Mammary epithelial cell (primary cell): ENCODE measurements at regions of chr10 and their contacts with region 1.

Region 1: DNA sequence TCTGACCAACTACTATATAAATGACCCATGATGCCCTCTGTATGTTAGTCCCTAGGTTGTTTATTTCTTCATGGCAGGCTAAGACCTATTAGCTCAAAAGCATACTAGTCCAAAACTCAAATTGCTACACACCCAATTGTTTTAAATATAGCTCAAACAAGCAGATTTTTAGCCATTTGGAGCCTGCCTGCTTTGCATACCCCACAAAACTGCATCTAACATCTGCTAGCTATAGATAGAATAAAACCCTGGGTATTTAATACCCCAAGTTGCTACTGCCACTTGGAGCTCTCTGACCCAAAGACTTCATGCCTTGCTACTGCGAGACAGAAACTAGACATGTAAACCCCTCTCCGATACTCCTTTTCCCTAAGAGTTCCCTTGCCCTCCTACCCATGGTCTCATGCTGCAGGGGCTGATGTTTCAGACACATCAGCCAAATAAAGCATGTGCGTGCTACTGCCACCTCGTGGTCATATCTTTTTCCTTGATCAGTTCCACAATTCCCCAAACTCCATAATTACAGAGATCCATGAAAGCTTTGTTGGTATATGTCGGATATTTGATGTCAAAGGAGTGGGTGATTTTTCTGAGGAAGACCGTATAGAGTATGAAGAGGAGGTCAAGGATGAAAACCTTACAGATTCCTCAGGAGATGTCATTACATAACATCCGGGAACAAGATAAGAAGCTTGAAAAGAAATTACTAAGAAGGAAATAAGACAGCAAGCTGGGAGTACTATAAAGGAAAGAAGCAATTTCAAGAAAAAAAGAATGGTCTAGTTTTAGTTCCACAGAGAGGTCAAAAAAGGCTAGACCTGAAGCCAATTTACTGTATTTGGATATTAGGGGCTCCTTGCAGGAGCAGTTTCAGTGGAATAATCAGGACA is 386.6 kb downstream of the SH2D4B start:
- DNase-seq: peak; percentile 21
- H3K4me3 ChIP-seq: no peak overlapping the region
- H3K27ac ChIP-seq: no peak overlapping the region
- H3K4me1 ChIP-seq: no peaks in the 10 kb centered on the region
- H3K27me3 ChIP-seq: no peaks in the 10 kb centered on the region
- CTCF ChIP-seq: peak; percentile 48 to 74

Region 2: DNA sequence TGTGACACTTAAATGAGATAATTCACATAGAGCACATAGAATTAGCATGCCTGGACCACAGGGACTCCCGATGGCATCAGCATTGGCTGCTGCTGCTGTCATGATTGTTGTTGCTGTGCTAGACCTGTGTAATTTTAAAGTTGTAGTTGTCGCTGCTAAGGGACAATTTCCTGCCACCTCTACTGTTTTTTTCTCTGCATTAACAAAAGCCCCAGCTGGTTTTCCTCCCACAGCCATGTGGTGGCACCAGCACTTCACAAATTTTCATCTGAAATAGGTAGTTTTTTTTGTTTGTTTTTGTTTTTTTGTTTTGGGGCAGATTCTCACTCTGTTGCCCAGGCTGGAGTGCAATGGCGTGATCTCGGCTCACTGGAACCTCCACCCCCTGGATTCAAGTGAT is 541.3 kb before region 1 on chr10:
- CTCF ChIA-PET with region 1: no interaction called
- dilution Hi-C with region 1: no loop called
- in situ Hi-C with region 1: no loop called
- intact Hi-C with region 1: loop called (anchors 1 kb)
- DNase-seq: peak; percentile 27
- H3K4me3 ChIP-seq: no peak overlapping the region
- H3K27ac ChIP-seq: no peak overlapping the region
- H3K4me1 ChIP-seq: no peaks in the 10 kb centered on the region
- H3K27me3 ChIP-seq: no peaks in the 10 kb centered on the region
- CTCF ChIP-seq: peak; percentile 66 to 69

Region 3: GRCh38 chr10:80599424-80599847 is 324.9 kb before region 1 on chr10:
- CTCF ChIA-PET with region 1: no interaction called
- dilution Hi-C with region 1: no loop called
- in situ Hi-C with region 1: no loop called
- intact Hi-C with region 1: loop called (anchors 1 kb)
- DNase-seq: peak; percentile 25
- H3K4me3 ChIP-seq: no peak overlapping the region
- H3K27ac ChIP-seq: no peak overlapping the region
- H3K4me1 ChIP-seq: no peaks in the 10 kb centered on the region
- H3K27me3 ChIP-seq: no peaks in the 10 kb centered on the region
- CTCF ChIP-seq: peak; percentile 91 to 93

Region 4: GRCh38 chr10:80699602-80700039 is 224.7 kb before region 1 on chr10:
- CTCF ChIA-PET with region 1: no interaction called
- dilution Hi-C with region 1: no loop called
- in situ Hi-C with region 1: loop called in 1 of 2 experiments (anchors 25 kb)
- intact Hi-C with region 1: loop called (anchors 1 kb)
- DNase-seq: peak; percentile 40
- H3K4me3 ChIP-seq: no peak overlapping the region
- H3K27ac ChIP-seq: no peak overlapping the region
- H3K4me1 ChIP-seq: no peaks in the 10 kb centered on the region
- H3K27me3 ChIP-seq: no peaks in the 10 kb centered on the region
- CTCF ChIP-seq: peak; percentile 74 to 89

Region 5: GRCh38 chr10:80855348-80855971 is 68.8 kb before region 1 on chr10:
- CTCF ChIA-PET with region 1: no interaction called
- dilution Hi-C with region 1: no loop called
- in situ Hi-C with region 1: no loop called
- intact Hi-C with region 1: loop called (anchors 1 kb)
- DNase-seq: no peak
- H3K4me3 ChIP-seq: no peak overlapping the region
- H3K27ac ChIP-seq: no peak overlapping the region
- H3K4me1 ChIP-seq: no peaks in the 10 kb centered on the region
- H3K27me3 ChIP-seq: peaks cover 3% of the 10 kb centered on the region
- CTCF ChIP-seq: peak in 1 of 2 donors; percentile 42

Region 6: DNA sequence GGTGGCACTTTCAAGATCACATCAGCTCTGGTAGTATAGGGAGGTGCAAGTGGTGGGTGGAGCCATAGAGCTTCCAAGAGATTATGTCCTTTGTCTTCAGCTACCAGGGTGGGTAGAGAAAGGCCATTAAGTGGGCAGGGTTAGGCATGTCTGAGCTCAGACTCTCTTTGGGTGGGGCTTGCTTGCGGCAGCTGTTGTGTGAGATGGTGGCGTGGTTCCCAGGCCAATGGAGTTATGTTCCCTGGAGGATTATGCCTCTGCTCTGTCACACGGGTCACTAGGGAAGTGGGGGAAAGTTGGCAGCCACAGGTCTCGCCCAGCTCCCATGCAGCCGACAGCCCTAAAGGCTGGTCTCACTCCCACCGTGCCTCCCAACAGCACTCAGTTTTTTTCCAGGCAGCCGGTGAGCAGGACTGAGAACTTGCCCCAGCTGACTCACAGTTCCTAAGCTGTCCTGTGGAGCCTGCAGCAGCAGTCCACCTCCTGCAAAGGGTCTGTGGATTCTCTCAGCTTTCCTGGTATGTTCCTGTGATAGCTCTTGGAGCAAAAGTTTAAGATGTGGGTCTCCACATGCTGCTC is 72.4 kb after region 1 on chr10:
- CTCF ChIA-PET with region 1: no interaction called
- dilution Hi-C with region 1: no loop called
- in situ Hi-C with region 1: no loop called
- intact Hi-C with region 1: no loop called
- DNase-seq: no peak
- H3K4me3 ChIP-seq: no peak overlapping the region
- H3K27ac ChIP-seq: no peak overlapping the region
- H3K4me1 ChIP-seq: no peaks in the 10 kb centered on the region
- H3K27me3 ChIP-seq: no peaks in the 10 kb centered on the region
- CTCF ChIP-seq: no peak